ENCODE measurements at regions of chr20 and their contacts with region 1.

Region 1: GRCh38 chr20:63864847-63865640 is at the start of gene TPD52L2:
- DNase-seq: peak; percentile 96 to 98
- H3K4me3 ChIP-seq: peak within 1 kb of the TSS; percentile 82 to 95 (median 92)
- H3K27ac ChIP-seq: peak within 1 kb of the TSS; percentile 69; the same call in 1 of the 2 replicates
- H3K4me1 ChIP-seq: peaks cover 0 to 9% (median 4%) of the 10 kb centered on the region in 4 experiments; a peak in 5 of 7 replicates
- H3K27me3 ChIP-seq: no peaks in the 10 kb centered on the region
- CTCF ChIP-seq: no peak
- EP300 ChIP-seq: no peak
- POLR2A ChIP-seq: peak; percentile 91 to 97
- RAD21 ChIP-seq: no peak
- total RNA-seq, gene TPD52L2: 77.1 and 78.1 TPM in 2 replicates

Region 2: GRCh38 chr20:63707549-63708300 is 157.3 kb before region 1 on chr20 and contains the starts of genes ARFRP1 and ZGPAT:
- CTCF ChIA-PET with region 1: interaction called, 4 read pairs
- POLR2A ChIA-PET with region 1: interaction called, 10 read pairs
- DNase-seq: peak in 1 of 2 experiments; percentile 93
- H3K4me3 ChIP-seq: peak within 1 kb of the TSS; percentile 46 to 88 (median 74)
- H3K27ac ChIP-seq: no peak within 1 kb of the TSS
- H3K4me1 ChIP-seq: peaks cover 0 to 11% (median 6%) of the 10 kb centered on the region in 4 experiments; a peak in 5 of 7 replicates
- H3K27me3 ChIP-seq: no peaks in the 10 kb centered on the region
- CTCF ChIP-seq: no peak
- EP300 ChIP-seq: no peak
- POLR2A ChIP-seq: peak in 1 of 2 experiments; percentile 53; a peak in 1 of 3 replicates
- RAD21 ChIP-seq: 0 out of 4 replicates have a peak, but pooled peaks of 1 of the 2 experiments have one; percentile 0
- total RNA-seq, gene ARFRP1: 21.9 and 22.9 TPM in 2 replicates
- total RNA-seq, gene ZGPAT: 21.4 and 24.9 TPM in 2 replicates

Region 3: GRCh38 chr20:63782051-63782471 is 83.0 kb before region 1 on chr20:
- CTCF ChIA-PET with region 1: interaction called, 19 read pairs
- POLR2A ChIA-PET with region 1: interaction called, 6 read pairs
- DNase-seq: no peak
- H3K4me3 ChIP-seq: no peak overlapping the region
- H3K27ac ChIP-seq: no peak overlapping the region
- H3K4me1 ChIP-seq: no peaks in the 10 kb centered on the region
- H3K27me3 ChIP-seq: no peaks in the 10 kb centered on the region
- CTCF ChIP-seq: peak; percentile 5 to 14 (median 5); a peak in 3 of 4 replicates
- EP300 ChIP-seq: no peak
- POLR2A ChIP-seq: no peak
- RAD21 ChIP-seq: no peak

Region 4: GRCh38 chr20:63877755-63878470 is 12.9 kb after region 1 on chr20:
- CTCF ChIA-PET with region 1: interaction called, 12 read pairs
- POLR2A ChIA-PET with region 1: interaction called, 26 read pairs
- DNase-seq: no peak
- H3K4me3 ChIP-seq: no peak overlapping the region
- H3K27ac ChIP-seq: no peak overlapping the region
- H3K4me1 ChIP-seq: no peaks in the 10 kb centered on the region
- H3K27me3 ChIP-seq: no peaks in the 10 kb centered on the region
- CTCF ChIP-seq: no peak
- EP300 ChIP-seq: no peak
- POLR2A ChIP-seq: no peak
- RAD21 ChIP-seq: no peak

Region 5: GRCh38 chr20:63955827-63956663 is 91.0 kb after region 1 on chr20 and contains the start of gene UCKL1:
- CTCF ChIA-PET with region 1: no interaction called
- POLR2A ChIA-PET with region 1: interaction called, 10 read pairs
- DNase-seq: peak in 1 of 2 experiments; percentile 91
- H3K4me3 ChIP-seq: peak within 1 kb of the TSS; percentile 94 to 98 (median 96)
- H3K27ac ChIP-seq: peak within 1 kb of the TSS; percentile 69
- H3K4me1 ChIP-seq: peaks cover 0 to 19% (median 12%) of the 10 kb centered on the region in 4 experiments; a peak in 6 of 7 replicates
- H3K27me3 ChIP-seq: no peaks in the 10 kb centered on the region
- CTCF ChIP-seq: no peak
- EP300 ChIP-seq: no peak
- POLR2A ChIP-seq: peak in 1 of 2 experiments; percentile 84; a peak in 1 of 3 replicates
- RAD21 ChIP-seq: no peak
- total RNA-seq, gene UCKL1: 36.5 and 37.4 TPM in 2 replicates

Measured in H1 (cell line).